ENCODE measurements at regions of chr20 and their contacts with region 1.

Region 1: DNA sequence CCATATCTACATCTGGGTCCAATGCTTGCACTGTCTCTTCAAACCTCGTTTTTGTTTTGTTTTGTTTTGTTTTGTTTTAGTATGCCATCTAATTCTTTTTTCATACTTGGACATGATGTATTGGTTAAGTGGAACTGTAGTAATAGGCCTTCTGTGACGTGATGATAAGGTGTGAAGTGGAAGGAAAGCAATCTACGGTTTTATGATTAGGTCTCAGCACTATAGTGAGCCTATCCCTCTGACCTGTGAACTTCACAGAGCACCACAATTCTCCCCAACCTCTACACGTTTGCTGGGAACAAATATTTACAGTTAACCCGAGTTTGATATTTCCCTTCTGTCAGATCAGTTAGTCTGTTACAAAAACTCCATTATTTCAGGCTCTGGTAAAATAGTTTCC is 19.1 kb upstream of the SLC24A3 start:
- DNase-seq: no peak
- H3K4me3 ChIP-seq: no peak overlapping the region
- H3K27ac ChIP-seq: no peak overlapping the region
- H3K27me3 ChIP-seq: no peaks in the 10 kb centered on the region
- CTCF ChIP-seq: no peak

Region 2: GRCh38 chr20:19095762-19096161 is 97.6 kb before region 1 on chr20:
- intact Hi-C with region 1: no loop called
- DNase-seq: no peak
- H3K4me3 ChIP-seq: no peak overlapping the region
- H3K27ac ChIP-seq: no peak overlapping the region
- H3K27me3 ChIP-seq: peaks cover 0 to 5% (median 0%) of the 10 kb centered on the region in 45 donors
- CTCF ChIP-seq: no peak

Region 3: GRCh38 chr20:19176470-19177052 is 16.8 kb before region 1 on chr20:
- intact Hi-C with region 1: loop called in 1 of 2 experiments (anchors 1 kb)
- DNase-seq: no peak
- H3K4me3 ChIP-seq: no peak overlapping the region
- H3K27ac ChIP-seq: no peak overlapping the region
- H3K27me3 ChIP-seq: peaks cover 0 to 13% (median 0%) of the 10 kb centered on the region in 45 donors
- CTCF ChIP-seq: no peak

Region 4: DNA sequence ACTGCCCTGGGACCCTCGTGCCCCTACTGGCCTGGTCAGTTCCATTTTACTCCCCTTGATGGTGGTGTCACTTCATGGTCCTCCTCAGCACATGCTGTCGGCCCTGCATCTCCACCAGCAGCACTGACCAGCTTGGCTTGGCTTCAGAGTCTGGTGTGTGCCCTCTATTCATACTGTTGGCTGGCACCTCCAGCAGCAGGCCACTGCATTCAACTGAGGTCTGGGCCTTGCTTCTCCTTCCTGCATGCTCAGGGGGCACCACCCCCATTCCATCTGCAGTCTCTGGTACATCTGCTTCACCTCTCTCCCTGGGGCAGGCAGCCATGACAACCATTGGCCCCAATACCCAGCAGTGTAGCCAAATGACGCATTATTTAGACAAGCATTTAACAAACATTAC is 175.0 kb after region 1 on chr20:
- intact Hi-C with region 1: no loop called
- DNase-seq: peak in 4 of 10 donors; percentile 30 to 67 (median 56)
- H3K4me3 ChIP-seq: no peak overlapping the region
- H3K27ac ChIP-seq: no peak overlapping the region
- H3K27me3 ChIP-seq: peaks cover 0 to 12% (median 0%) of the 10 kb centered on the region in 45 donors
- CTCF ChIP-seq: no peak

Region 5: GRCh38 chr20:20076297-20077065 is 883.1 kb after region 1 on chr20:
- intact Hi-C with region 1: no loop called
- DNase-seq: peak in 9 of 10 donors; percentile 74 to 95 (median 92)
- H3K4me3 ChIP-seq: no peak overlapping the region
- H3K27ac ChIP-seq: peak overlapping the region in 4 of 59 donors; percentile 6 to 56 (median 32)
- H3K27me3 ChIP-seq: no peaks in the 10 kb centered on the region
- CTCF ChIP-seq: peak in 6 of 56 donors; percentile 11 to 38 (median 27)

Measured in dorsolateral prefrontal cortex (tissue), 120 donors.